A549 (cell line): ENCODE measurements at regions of chr2 and their contacts with region 1.

Region 1: DNA sequence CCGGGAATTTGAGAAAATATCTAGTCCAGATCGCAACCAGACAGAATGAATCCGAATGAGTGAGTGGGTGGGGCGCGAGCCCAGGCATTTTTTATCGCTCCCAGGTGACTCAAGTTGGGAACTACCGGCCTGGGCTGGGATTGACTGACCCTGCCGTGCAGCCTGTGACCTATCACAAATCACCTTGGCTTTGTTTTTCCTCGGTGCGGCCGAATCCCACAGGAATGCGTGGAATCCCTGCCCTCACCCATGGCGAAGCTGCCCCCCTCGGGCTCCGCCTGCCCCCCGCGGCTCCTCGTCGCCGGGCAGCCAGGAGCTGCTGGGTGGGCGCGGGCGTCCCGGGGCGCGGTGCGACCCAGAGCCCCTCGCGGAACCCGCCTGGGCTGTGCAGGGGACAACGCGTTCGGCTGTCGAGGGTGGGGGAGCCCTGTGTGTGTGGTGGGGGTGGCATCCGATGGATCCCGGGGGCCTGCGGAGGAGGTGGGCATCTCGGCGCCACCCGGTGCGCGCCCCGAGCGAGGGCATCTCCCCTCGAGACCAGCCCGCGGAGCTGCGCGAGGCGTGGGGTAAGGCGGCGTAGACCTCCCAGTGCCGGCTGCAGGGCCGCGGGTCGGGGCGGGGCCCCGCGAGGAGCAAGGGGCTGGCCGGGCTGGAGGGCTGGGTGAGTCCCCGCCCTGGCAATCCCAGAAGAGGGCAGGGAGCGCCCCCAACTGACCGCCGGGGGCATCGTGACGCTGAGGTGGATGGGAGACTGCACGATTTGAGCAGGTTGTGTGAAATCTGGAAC is 16.5 kb downstream of the B3GNT7 start:
- DNase-seq: peak; percentile 67 to 84
- ATAC-seq: peak; percentile 97 to 99
- H3K4me3 ChIP-seq: peak overlapping the region; percentile 62
- H3K27ac ChIP-seq: peak overlapping the region; percentile 66 to 92
- H3K4me1 ChIP-seq: peaks cover 4% of the 10 kb centered on the region; the same call in 2 of the 3 replicates
- CTCF ChIP-seq: peak; percentile 96
- EP300 ChIP-seq: no peak
- POLR2A ChIP-seq: peak; percentile 60
- RAD21 ChIP-seq: peak; percentile 92 to 95

Region 2: GRCh38 chr2:231227309-231228162 is 184.5 kb before region 1 on chr2:
- CTCF ChIA-PET with region 1: interaction called, 333 read pairs
- POLR2A ChIA-PET with region 1: interaction called, 4 read pairs
- DNase-seq: peak; percentile 83 to 92
- ATAC-seq: peak; percentile 99
- H3K4me3 ChIP-seq: no peak overlapping the region
- H3K27ac ChIP-seq: peak overlapping the region in 1 of 2 experiments; percentile 53; a peak in 1 of 6 replicates
- H3K4me1 ChIP-seq: peaks cover 5% of the 10 kb centered on the region; the same call in 1 of the 3 replicates
- CTCF ChIP-seq: peak; percentile 87
- EP300 ChIP-seq: no peak
- POLR2A ChIP-seq: no peak
- RAD21 ChIP-seq: peak; percentile 88 to 94

Region 3: DNA sequence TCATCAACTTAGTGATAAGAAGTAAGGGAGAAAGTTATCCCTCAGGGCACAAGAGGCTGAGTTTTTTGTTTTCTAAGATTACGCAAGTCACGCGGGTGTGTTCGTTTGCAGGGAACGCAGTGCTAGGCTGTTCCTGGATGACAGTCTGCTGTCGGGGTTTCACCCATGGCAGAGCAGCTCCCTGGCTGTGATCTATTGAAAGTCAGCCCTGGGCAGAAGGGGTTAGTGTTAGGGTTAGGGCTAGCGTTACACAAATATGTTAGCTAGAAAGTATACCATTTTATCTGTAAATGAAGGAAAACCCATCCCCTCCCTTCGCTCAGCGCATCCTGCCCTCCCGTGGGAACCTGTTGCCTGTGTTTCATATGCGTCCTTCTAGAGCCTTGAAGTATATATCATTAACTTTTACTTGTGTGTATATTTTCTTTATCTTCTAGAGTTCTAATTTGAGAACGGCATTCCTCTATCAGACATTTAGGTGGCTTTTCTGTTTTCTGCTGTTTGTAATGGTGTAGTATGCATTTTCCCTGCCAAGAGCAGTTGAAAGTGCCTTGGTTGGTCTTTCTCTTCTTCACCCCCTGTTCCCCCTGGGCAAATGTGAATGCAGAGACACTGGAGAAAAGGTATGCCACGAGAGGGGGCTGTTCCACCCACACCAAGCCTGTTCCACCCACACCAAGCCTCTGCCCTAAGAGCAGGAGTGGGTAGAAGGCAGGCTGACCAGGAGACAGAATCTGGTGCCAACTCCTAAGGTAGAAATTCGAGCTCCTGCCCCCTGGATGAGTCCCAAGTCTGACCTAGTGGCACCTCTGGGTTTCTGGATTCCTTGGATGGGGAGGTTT is 166.6 kb before region 1 on chr2:
- CTCF ChIA-PET with region 1: interaction called, 14 read pairs
- POLR2A ChIA-PET with region 1: no interaction called
- DNase-seq: peak in 1 of 2 experiments; percentile 17
- ATAC-seq: peak; percentile 70 to 82; a peak in 5 of 6 replicates
- H3K4me3 ChIP-seq: no peak overlapping the region
- H3K27ac ChIP-seq: no peak overlapping the region
- H3K4me1 ChIP-seq: peaks cover 4% of the 10 kb centered on the region; the same call in 1 of the 3 replicates
- CTCF ChIP-seq: no peak
- EP300 ChIP-seq: no peak
- POLR2A ChIP-seq: no peak
- RAD21 ChIP-seq: peak in 1 of 2 experiments; percentile 32; a peak in 1 of 5 replicates

Region 4: GRCh38 chr2:231297108-231297908 is 114.7 kb before region 1 on chr2:
- CTCF ChIA-PET with region 1: interaction called, 294 read pairs
- POLR2A ChIA-PET with region 1: no interaction called
- DNase-seq: peak; percentile 71 to 84
- ATAC-seq: peak; percentile 92
- H3K4me3 ChIP-seq: no peak overlapping the region
- H3K27ac ChIP-seq: no peak overlapping the region
- H3K4me1 ChIP-seq: peaks cover 25% of the 10 kb centered on the region
- CTCF ChIP-seq: peak; percentile 79
- EP300 ChIP-seq: no peak
- POLR2A ChIP-seq: no peak
- RAD21 ChIP-seq: peak; percentile 77 to 78

Region 5: GRCh38 chr2:231370749-231371429 is 41.1 kb before region 1 on chr2:
- CTCF ChIA-PET with region 1: interaction called, 14 read pairs
- POLR2A ChIA-PET with region 1: no interaction called
- DNase-seq: no peak
- ATAC-seq: peak in 1 of 2 experiments; percentile 36; a peak in 2 of 6 replicates
- H3K4me3 ChIP-seq: no peak overlapping the region
- H3K27ac ChIP-seq: peak overlapping the region in 1 of 2 experiments; percentile 27; a peak in 1 of 6 replicates
- H3K4me1 ChIP-seq: peaks cover 22% of the 10 kb centered on the region
- CTCF ChIP-seq: no peak
- EP300 ChIP-seq: no peak
- POLR2A ChIP-seq: no peak
- RAD21 ChIP-seq: no peak

Region 6: GRCh38 chr2:231399853-231400680 is 12.0 kb before region 1 on chr2:
- CTCF ChIA-PET with region 1: interaction called, 141 read pairs
- POLR2A ChIA-PET with region 1: interaction called, 9 read pairs
- DNase-seq: peak; percentile 49 to 64
- ATAC-seq: peak; percentile 86 to 89
- H3K4me3 ChIP-seq: no peak overlapping the region
- H3K27ac ChIP-seq: peak overlapping the region; percentile 66 to 94
- H3K4me1 ChIP-seq: peaks cover 16% of the 10 kb centered on the region
- CTCF ChIP-seq: no peak
- EP300 ChIP-seq: no peak
- POLR2A ChIP-seq: no peak
- RAD21 ChIP-seq: no peak